ENCODE measurements at regions of chr2 and their contacts with region 1.

Region 1: DNA sequence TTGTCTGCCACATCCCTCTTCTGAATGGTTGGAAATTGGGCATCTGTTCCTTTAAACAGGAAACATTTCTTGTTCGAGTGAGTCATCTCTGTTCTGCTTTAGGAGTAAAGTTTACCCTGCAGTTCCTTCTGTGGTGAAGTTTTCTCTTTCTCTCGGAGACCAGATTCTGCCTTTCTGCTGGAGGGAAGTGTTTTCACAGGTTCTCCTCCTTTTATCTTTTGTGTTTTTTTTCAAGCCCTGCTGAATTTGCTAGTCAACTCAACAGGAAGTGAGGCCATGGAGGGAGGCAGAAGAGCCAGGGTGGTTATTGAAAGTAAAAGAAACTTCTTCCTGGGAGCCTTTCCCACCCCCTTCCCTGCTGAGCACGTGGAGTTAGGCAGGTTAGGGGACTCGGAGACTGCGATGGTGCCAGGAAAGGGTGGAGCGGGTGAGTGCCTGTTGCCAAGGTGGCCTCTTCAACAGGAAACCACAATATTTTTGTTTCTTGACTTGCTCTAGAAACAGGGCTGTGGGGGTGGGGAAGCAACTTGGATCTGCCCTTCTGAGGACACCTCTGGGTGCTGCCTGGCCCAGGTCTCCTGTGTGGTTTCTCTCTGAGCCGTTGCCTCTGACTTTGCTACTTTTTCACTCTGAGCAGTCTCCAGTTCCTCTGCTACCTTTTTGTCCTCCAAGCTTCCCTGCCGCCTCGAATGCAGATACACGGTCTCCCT is 2.2 kb upstream of the CASP8 start:
- DNase-seq: peak; percentile 70 to 100 (median 96)
- ATAC-seq: peak; percentile 69 to 77
- H3K4me3 Mint-ChIP-seq: peak overlapping the region; percentile 83 to 100 (median 92)
- H3K27ac Mint-ChIP-seq: peak overlapping the region; percentile 92 to 100 (median 99)
- H3K4me1 Mint-ChIP-seq: peaks cover 40 to 85% (median 77%) of the 10 kb centered on the region in 4 donors
- H3K27me3 Mint-ChIP-seq: peaks cover 0 to 1% (median 0%) of the 10 kb centered on the region in 5 donors

Region 2: DNA sequence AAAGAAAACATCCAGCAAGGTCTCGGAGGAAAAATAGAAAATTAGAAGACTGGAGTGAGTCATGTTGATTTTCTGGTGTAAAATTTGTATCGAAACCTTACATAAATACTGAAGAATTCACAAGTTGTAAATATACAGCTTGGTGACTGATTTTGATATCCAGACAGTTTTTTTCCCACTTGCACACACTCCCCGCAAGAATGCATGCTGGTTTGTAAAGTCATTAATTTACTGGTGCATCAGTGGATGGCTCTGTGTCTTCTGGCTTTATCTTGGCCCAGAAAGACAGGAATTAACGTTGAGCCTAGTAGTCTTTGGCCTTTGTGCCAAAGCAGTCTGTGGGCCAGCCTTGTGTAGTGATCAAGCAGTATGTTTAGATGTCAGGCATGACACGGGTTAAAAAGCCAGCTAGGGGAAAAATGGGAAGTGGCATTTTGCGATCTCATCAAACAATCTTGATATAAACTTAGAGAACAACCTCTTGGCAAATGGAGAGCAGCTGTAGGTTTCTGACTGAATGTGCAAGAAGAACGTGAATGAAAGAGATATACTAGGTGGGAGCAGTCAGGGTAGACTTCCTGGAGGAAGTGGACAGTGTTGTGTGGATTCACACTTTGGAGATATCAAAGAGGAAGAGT is 20.5 kb before region 1 on chr2:
- POLR2A ChIA-PET with region 1: interaction called, 72 read pairs
- DNase-seq: no peak
- ATAC-seq: no peak
- H3K4me3 Mint-ChIP-seq: peak overlapping the region in 9 of 10 donors; percentile 2 to 99 (median 90)
- H3K27ac Mint-ChIP-seq: peak overlapping the region; percentile 68 to 99 (median 86)
- H3K4me1 Mint-ChIP-seq: peaks cover 19 to 81% (median 52%) of the 10 kb centered on the region in 4 donors
- H3K27me3 Mint-ChIP-seq: no peaks in the 10 kb centered on the region

Region 3: GRCh38 chr2:201242571-201243277 is 15.4 kb before region 1 on chr2:
- POLR2A ChIA-PET with region 1: interaction called, 32 read pairs
- DNase-seq: no peak
- ATAC-seq: peak in 1 of 2 donors; percentile 58
- H3K4me3 Mint-ChIP-seq: peak overlapping the region in 1 of 10 donors; percentile 9
- H3K27ac Mint-ChIP-seq: peak overlapping the region in 9 of 10 donors; percentile 35 to 89 (median 66)
- H3K4me1 Mint-ChIP-seq: peaks cover 13 to 85% (median 65%) of the 10 kb centered on the region in 4 donors
- H3K27me3 Mint-ChIP-seq: no peaks in the 10 kb centered on the region